ENCODE measurements at regions of chr4 and their contacts with region 1.

Region 1: GRCh38 chr4:155787113-155787710 is 28.4 kb downstream of the GUCY1B1 start:
- DNase-seq: peak in 1 of 6 donors; percentile 36
- ATAC-seq: peak; percentile 94 to 99 (median 98)
- H3K4me3 ChIP-seq: no peak overlapping the region
- H3K27ac ChIP-seq: no peak overlapping the region
- H3K4me1 ChIP-seq: peaks cover 0 to 11% (median 0%) of the 10 kb centered on the region in 3 donors
- H3K27me3 ChIP-seq: no peaks in the 10 kb centered on the region
- CTCF ChIP-seq: peak in 3 of 4 donors; percentile 53 to 63 (median 60)

Region 2: GRCh38 chr4:155442267-155443105 is 344.7 kb before region 1 on chr4:
- intact Hi-C with region 1: loop called in 2 of 3 experiments (anchors 5 to 10 kb)
- DNase-seq: peak; percentile 59 to 91 (median 78)
- ATAC-seq: peak; percentile 86 to 100 (median 98)
- H3K4me3 ChIP-seq: peak overlapping the region in 2 of 4 donors; percentile 15 to 25
- H3K27ac ChIP-seq: no peak overlapping the region
- H3K4me1 ChIP-seq: peaks cover 0 to 10% (median 0%) of the 10 kb centered on the region in 3 donors
- H3K27me3 ChIP-seq: no peaks in the 10 kb centered on the region
- CTCF ChIP-seq: peak; percentile 86 to 96 (median 94)

Region 3: DNA sequence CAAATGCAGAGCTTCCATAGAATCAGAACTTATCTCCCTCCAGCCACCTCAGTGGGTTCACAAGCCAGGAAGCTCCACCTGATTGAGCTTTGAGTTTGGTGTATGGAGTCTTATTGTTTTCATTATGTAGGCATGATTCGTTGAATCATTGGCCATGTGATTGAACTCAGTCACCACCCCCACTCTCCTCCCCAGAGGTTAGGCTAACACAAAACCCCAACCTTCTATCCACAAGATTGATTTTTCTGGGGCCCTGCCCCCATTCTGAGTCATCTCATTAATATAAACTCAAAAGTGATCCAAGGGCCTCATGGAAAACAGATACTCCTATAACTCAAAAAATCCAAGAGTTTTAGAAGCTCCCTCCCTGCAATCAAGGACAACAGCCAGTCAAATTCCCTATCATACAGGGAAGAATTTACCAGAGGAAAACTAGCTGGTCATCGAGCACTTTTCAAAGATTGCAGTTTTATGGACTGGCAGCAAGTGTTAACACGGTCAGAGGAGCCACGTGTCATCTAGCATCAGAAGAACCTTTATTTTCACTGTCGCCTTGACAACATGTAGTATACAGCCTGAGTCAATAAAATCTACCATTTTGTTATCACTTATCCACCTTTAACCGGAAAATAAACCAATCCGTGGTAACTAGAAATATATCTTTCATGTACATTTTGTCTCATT is 64.3 kb before region 1 on chr4:
- intact Hi-C with region 1: no loop called
- DNase-seq: no peak
- ATAC-seq: peak in 1 of 4 donors; percentile 25
- H3K4me3 ChIP-seq: no peak overlapping the region
- H3K27ac ChIP-seq: no peak overlapping the region
- H3K4me1 ChIP-seq: no peaks in the 10 kb centered on the region
- H3K27me3 ChIP-seq: no peaks in the 10 kb centered on the region
- CTCF ChIP-seq: no peak

Measured in pancreas (tissue), 10 donors.